ENCODE measurements at regions of chr3 and their contacts with region 1.

Region 1: GRCh38 chr3:134212906-134213665 is 37.6 kb downstream of the RYK start:
- DNase-seq: peak; percentile 61
- H3K4me3 Mint-ChIP-seq: no peak overlapping the region
- H3K27ac Mint-ChIP-seq: no peak overlapping the region
- H3K4me1 Mint-ChIP-seq: peaks cover 18% of the 10 kb centered on the region
- H3K27me3 Mint-ChIP-seq: peaks cover 6% of the 10 kb centered on the region

Region 2: GRCh38 chr3:133487920-133488540 is 725.1 kb before region 1 on chr3:
- intact Hi-C with region 1: no loop called
- DNase-seq: no peak
- H3K4me3 Mint-ChIP-seq: no peak overlapping the region
- H3K27ac Mint-ChIP-seq: no peak overlapping the region
- H3K4me1 Mint-ChIP-seq: peaks cover 44% of the 10 kb centered on the region
- H3K27me3 Mint-ChIP-seq: peaks cover 3% of the 10 kb centered on the region

Region 3: DNA sequence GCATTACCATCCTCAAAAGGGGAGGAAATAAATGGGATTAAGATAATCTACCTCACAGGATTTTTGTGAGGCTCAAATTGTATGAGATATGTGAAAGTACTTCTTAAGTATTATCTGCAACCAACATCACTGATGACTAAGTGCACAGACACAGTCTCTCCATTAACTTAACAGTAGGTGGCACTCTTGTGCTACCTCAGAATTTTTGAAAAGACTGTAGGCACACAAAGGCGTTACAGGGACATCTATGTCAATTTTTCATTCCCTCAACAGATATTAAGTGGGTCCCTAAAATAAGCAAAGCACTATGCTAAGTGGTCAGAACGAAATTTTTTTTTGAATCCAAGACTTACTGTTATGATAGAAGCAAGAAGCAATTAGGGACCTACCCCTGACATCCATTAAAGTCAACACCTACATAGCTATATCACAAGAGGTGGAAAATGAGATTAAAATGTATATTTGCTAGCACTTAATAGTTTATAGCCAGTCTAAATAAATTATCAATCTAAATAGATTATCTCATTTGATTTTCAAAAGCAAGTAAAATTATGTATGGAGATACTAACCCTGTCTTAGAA is 15.3 kb before region 1 on chr3:
- intact Hi-C with region 1: loop called (anchors 1 kb)
- DNase-seq: no peak
- H3K4me3 Mint-ChIP-seq: no peak overlapping the region
- H3K27ac Mint-ChIP-seq: no peak overlapping the region
- H3K4me1 Mint-ChIP-seq: peaks cover 6% of the 10 kb centered on the region
- H3K27me3 Mint-ChIP-seq: no peaks in the 10 kb centered on the region

Region 4: GRCh38 chr3:134239538-134239937 is 26.5 kb after region 1 on chr3:
- intact Hi-C with region 1: loop called (anchors 2 kb)
- DNase-seq: no peak
- H3K4me3 Mint-ChIP-seq: peak overlapping the region; percentile 5
- H3K27ac Mint-ChIP-seq: peak overlapping the region; percentile 24
- H3K4me1 Mint-ChIP-seq: peaks cover 44% of the 10 kb centered on the region
- H3K27me3 Mint-ChIP-seq: peaks cover 24% of the 10 kb centered on the region

Region 5: DNA sequence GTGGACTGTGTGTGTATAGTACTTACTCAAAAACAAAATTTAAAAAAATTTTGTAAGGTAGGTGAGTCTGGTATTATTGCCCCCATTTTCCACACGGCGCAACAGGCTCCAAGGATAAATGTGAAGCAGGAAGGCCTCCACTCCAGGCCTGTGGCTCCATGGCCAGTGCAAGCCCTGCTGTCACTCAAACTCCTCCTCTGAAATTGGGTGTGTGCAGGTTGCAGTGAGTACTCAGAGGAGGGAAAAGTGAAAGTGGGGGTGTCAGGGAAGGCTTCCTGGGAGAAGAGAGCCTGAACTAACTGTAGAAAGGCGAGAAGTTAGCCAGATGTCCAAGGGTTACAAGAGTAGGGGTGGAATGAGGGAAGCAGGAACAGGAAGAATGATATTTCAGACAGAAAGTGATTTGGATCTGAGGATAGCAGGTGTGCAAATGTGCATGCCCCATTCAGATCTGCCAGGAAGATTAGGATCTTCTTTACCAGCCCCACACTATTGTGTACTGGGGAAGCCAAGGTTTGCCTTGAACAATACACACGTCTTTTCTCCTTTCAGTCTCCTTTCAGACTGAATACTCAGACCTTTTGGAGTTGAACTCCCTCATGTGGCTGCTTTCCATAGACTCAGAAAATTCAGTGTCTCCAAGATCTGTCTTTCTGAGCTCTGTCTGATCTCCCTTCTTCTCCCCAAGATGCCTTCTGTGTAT is 86.2 kb after region 1 on chr3:
- intact Hi-C with region 1: loop called (anchors 1 kb)
- DNase-seq: no peak
- H3K4me3 Mint-ChIP-seq: no peak overlapping the region
- H3K27ac Mint-ChIP-seq: no peak overlapping the region
- H3K4me1 Mint-ChIP-seq: no peaks in the 10 kb centered on the region
- H3K27me3 Mint-ChIP-seq: peaks cover 55% of the 10 kb centered on the region

Region 6: GRCh38 chr3:134473868-134474546 is 260.9 kb after region 1 on chr3:
- intact Hi-C with region 1: loop called (anchors 1 kb)
- DNase-seq: peak; percentile 63
- H3K4me3 Mint-ChIP-seq: no peak overlapping the region
- H3K27ac Mint-ChIP-seq: no peak overlapping the region
- H3K4me1 Mint-ChIP-seq: no peaks in the 10 kb centered on the region
- H3K27me3 Mint-ChIP-seq: peaks cover 1% of the 10 kb centered on the region